Activated T-helper 1 cell treated with anti-CD3 and anti-CD28 coated beads, Interleukin-12 subunit alpha, Interleukin-12 subunit beta, Interleukin-2, Interleukin-4 antibody, amounts not matched to agents 30 ng/mL and 10 ng/mL and 1 ng/mL, durations not matched to agents 14 hours and 24 hours and 36 hours (primary cell): ENCODE measurements at regions of chr11 and their contacts with region 1.

Region 1: DNA sequence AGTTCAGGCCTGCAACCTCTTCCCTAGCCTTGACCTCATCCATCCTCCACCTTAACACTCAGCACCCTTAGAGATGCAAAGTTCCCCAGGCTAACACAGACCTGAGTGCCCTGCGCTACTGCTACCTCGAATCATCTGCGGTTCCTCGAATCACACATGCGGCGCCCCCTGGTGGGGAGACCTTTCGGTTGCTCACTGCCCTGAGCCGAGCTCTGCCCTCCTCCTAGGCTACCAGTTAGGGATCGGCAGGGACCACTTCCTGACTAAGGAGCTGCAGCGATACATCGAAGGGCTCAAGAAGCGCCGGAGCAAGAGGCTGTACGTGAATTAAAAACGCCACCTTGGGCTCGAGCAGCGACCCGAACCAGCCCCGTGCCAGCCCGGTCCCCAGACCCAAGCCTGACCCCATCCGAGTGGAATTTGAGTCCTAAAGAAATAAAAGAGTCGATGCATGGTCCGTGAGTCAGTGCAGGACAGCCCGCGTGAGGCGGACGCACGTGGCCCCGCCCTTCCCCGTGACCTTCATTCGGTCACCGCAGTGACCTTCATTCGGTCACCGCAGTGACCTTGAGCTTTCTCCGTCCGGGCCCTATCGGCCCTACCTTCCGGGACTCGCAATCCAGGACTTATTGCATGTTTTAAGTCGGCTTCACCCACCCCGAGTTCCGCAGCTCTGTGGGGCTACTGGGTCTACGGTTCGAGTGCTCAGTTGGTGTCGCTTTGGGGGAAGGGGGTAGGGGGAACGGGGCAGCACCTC is 830 bp upstream of the ESRRA start:
- DNase-seq: peak; percentile 86
- H3K4me3 Mint-ChIP-seq: peak overlapping the region; percentile 91
- H3K27ac Mint-ChIP-seq: peak overlapping the region; percentile 98
- H3K4me1 Mint-ChIP-seq: peaks cover 18% of the 10 kb centered on the region
- H3K27me3 Mint-ChIP-seq: peaks cover 19% of the 10 kb centered on the region

Region 2: DNA sequence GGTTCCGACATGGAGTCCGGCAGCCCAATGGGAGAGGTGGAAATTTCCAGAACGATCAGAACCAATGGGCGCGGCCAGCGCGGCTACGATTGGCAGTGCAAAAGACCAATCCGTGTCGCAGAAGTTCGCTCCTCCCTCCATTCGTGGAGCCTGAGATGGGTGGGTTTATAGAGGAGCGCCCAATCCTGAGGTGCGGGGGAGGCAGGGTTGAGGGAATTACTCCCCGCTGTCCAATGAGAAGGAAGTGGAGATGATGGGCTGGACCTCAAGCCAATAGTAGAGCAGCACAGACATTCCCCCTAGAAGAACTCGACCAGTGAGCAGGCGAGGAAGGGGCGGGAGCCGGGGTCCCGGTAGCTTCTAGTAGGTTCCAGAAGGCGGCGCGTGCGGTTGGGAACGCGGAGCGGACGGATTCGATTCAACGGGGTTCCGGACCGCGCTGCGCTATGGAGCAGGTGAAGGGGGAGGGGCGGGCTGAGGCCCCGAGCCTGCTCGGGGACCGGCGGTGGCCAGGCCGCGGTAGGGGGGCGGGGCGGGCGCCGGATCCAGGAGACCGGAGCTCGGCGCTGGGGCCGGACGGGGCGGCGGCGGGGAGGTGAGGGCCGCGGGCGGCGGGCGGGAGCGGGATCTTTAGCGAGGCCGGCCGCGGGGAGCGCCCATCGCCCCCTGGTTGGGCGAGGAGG is 118.5 kb before region 1 on chr11 and contains the start of gene STIP1:
- intact Hi-C with region 1: loop called (anchors 1 kb)
- DNase-seq: peak; percentile 99
- H3K4me3 Mint-ChIP-seq: peak within 1 kb of the TSS; percentile 95
- H3K27ac Mint-ChIP-seq: peak within 1 kb of the TSS; percentile 99
- H3K4me1 Mint-ChIP-seq: peaks cover 39% of the 10 kb centered on the region
- H3K27me3 Mint-ChIP-seq: peaks cover 2% of the 10 kb centered on the region
- total RNA-seq, gene STIP1: 493 and 495 TPM in 2 replicates

Region 3: DNA sequence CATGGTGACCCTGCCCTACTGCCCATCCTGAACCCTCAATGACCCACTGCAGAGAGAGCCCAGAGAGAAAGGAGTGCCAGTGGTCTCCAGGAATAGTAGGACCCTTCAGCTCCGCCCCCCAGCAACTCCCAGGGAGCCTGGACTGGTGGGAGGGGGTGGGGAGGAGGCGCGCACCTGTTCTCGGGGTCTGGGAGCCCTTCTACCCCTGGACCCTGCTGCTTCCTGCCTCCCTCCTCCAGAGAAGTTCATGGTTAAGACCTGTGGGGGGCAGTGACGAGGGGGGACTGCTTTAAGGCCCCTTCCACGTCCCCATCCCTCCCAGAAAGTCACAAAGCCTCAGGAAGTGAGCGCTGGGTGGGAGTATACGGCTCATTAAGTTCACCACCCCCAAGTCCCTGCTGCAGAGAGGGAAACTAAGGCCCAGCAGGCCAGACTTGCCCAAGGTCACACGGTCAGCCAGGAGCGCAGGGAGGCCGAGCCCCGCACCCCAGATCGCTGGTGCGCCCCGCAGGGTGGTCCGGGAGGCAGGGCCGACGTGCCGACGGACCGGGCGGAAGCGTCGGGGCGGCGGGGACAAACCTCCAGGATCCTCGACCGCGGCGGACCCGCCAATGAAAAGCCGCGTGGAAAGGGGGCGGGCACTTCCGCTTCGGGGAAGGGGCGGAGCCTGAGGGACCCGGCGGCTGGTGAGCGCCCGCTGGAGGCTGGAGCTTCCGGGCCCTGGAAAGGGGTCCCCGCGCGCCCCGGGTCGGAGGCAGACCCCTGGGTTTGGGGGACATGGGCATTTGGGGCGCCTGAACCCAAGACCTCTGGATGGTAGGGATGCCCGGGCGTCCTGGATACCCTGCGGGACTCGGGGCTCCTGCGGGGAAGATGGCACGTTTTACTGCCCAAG is 78.6 kb before region 1 on chr11 and contains the starts of genes NUDT22 and TRPT1:
- intact Hi-C with region 1: loop called (anchors 1 kb)
- DNase-seq: peak; percentile 92
- H3K4me3 Mint-ChIP-seq: peak within 1 kb of the TSS; percentile 87
- H3K27ac Mint-ChIP-seq: peak within 1 kb of the TSS; percentile 80
- H3K4me1 Mint-ChIP-seq: peaks cover 27% of the 10 kb centered on the region
- H3K27me3 Mint-ChIP-seq: no peaks in the 10 kb centered on the region
- total RNA-seq, gene NUDT22: 74.9 and 79.4 TPM in 2 replicates
- total RNA-seq, gene TRPT1: 30.3 and 35.5 TPM in 2 replicates

Region 4: GRCh38 chr11:64246871-64247728 is 57.4 kb before region 1 on chr11 and contains the start of gene PPP1R14B:
- intact Hi-C with region 1: loop called (anchors 1 kb)
- DNase-seq: peak; percentile 79
- H3K4me3 Mint-ChIP-seq: peak within 1 kb of the TSS; percentile 94
- H3K27ac Mint-ChIP-seq: peak within 1 kb of the TSS; percentile 94
- H3K4me1 Mint-ChIP-seq: peaks cover 29% of the 10 kb centered on the region
- H3K27me3 Mint-ChIP-seq: peaks cover 1% of the 10 kb centered on the region
- total RNA-seq, gene PPP1R14B: 238 and 248 TPM in 2 replicates

Region 5: DNA sequence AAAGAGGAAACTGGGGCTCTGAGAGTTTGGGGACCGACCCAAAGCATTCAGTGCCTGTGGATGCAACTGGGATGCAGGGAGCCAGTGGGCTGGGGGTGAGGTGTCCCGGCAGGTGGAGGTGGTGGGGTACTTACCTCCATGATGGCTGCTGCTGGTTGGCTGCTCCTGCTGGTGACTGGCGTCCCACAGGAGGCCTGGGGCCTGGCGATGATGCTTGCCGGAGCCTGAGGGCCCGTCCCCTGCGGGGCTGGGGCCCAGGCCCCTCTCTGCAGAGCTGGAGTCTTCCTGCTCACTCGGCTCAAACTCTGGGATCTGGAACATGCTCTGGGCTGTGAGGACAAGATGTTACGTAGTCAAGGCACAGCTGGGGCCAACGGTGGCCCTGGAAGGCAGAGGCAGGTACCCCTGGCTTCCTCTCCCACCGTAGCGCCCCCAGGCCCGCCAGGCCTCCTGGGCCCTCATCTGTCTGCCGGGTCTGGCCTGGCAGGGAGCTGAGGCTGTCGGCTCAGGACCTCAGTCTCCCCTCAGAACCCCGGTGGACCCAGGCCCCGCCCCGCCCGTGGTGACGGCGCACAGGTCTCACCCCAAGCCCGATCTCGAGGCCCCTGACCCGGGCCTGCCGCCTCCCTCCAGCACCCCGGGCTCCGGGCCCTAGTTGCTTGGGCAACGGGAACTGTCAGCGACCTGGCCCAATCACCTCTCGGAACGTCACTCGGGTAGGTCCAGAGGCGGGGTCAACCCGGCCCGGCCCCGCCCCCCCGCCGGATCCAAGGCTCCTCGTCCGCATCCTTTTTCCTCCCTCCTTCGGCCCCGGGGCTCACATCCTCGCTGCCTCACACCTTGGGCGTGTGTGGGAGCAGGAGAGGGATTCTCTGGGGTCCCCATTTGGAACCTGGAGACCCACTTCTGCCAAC is 20.2 kb before region 1 on chr11 and contains the start of gene BAD:
- intact Hi-C with region 1: loop called (anchors 1 kb)
- DNase-seq: peak; percentile 91
- H3K4me3 Mint-ChIP-seq: peak within 1 kb of the TSS; percentile 87
- H3K27ac Mint-ChIP-seq: peak within 1 kb of the TSS; percentile 95
- H3K4me1 Mint-ChIP-seq: peaks cover 30% of the 10 kb centered on the region
- H3K27me3 Mint-ChIP-seq: peaks cover 1% of the 10 kb centered on the region
- total RNA-seq, gene BAD: 30.1 and 38.0 TPM in 2 replicates

Region 6: GRCh38 chr11:64317957-64318693 is 13.6 kb after region 1 on chr11 and contains the start of gene PRDX5:
- intact Hi-C with region 1: loop called (anchors 1 kb)
- DNase-seq: peak; percentile 96
- H3K4me3 Mint-ChIP-seq: peak within 1 kb of the TSS; percentile 94
- H3K27ac Mint-ChIP-seq: peak within 1 kb of the TSS; percentile 100
- H3K4me1 Mint-ChIP-seq: peaks cover 34% of the 10 kb centered on the region
- H3K27me3 Mint-ChIP-seq: no peaks in the 10 kb centered on the region
- total RNA-seq, gene PRDX5: 89.0 and 100 TPM in 2 replicates

Region 7: GRCh38 chr11:64358907-64359711 is 54.6 kb after region 1 on chr11 and contains the start of gene RPS6KA4:
- intact Hi-C with region 1: loop called (anchors 1 kb)
- DNase-seq: peak; percentile 52
- H3K4me3 Mint-ChIP-seq: peak within 1 kb of the TSS; percentile 94
- H3K27ac Mint-ChIP-seq: peak within 1 kb of the TSS; percentile 85
- H3K4me1 Mint-ChIP-seq: peaks cover 30% of the 10 kb centered on the region
- H3K27me3 Mint-ChIP-seq: no peaks in the 10 kb centered on the region
- total RNA-seq, gene RPS6KA4: 38.3 and 46.0 TPM in 2 replicates